PC-9 (cell line): ENCODE measurements at regions of chr17 and their contacts with region 1.

Region 1: GRCh38 chr17:39547713-39548478 is 59.8 kb downstream of the NEUROD2 start:
- DNase-seq: peak; percentile 49 to 67
- H3K4me3 ChIP-seq: no peak overlapping the region
- H3K27ac ChIP-seq: no peak overlapping the region
- H3K4me1 ChIP-seq: no peaks in the 10 kb centered on the region
- H3K27me3 ChIP-seq: no peaks in the 10 kb centered on the region
- CTCF ChIP-seq: peak; percentile 98

Region 2: DNA sequence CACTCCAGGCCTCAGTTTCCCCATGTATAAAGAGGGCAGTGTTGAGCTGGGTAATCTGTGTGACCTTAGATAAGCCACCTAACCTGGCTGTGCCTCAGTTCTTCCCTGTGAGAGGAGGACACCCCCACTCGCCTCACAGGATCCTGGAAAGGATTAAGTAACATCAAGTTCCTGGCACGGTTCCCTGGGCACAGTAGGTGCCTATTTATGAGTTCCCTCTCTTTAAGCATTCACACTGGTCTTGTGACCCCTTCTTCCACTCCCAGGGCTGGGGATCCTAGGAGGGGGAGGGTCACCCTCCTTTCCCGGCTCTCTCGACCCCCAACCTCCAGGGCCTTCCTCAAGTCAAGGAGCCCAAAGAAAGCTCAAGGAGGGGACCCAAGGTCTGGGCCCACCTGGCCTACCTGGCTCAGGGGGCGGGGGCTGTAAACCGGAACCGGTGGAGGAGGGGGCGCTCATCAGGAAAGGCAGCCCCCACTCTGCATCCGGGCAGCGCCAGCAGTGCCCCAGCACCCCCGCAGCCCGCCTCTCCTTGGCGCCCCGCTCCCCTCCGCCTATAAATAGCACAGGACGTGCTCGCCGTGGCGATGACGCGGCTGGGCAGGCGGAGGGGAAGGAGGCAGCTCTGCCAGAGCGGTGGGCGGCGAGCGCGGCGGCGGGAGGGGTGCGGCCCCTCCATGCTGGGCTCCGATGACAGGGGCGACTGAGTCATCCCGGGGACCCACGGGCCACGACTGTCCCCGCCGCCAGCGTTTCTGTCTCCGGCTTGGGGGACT is 338.4 kb before region 1 on chr17:
- CTCF ChIA-PET with region 1: interaction called, 5 read pairs
- POLR2A ChIA-PET with region 1: no interaction called
- intact Hi-C with region 1: loop called (anchors 2 kb)
- DNase-seq: no peak
- H3K4me3 ChIP-seq: no peak overlapping the region
- H3K27ac ChIP-seq: no peak overlapping the region
- H3K4me1 ChIP-seq: no peaks in the 10 kb centered on the region
- H3K27me3 ChIP-seq: no peaks in the 10 kb centered on the region
- CTCF ChIP-seq: no peak

Region 3: GRCh38 chr17:39527220-39527813 is 20.6 kb before region 1 on chr17:
- CTCF ChIA-PET with region 1: no interaction called
- POLR2A ChIA-PET with region 1: no interaction called
- intact Hi-C with region 1: loop called (anchors 1 kb)
- DNase-seq: no peak
- H3K4me3 ChIP-seq: no peak overlapping the region
- H3K27ac ChIP-seq: no peak overlapping the region
- H3K4me1 ChIP-seq: peaks cover 6% of the 10 kb centered on the region
- H3K27me3 ChIP-seq: no peaks in the 10 kb centered on the region
- CTCF ChIP-seq: peak; percentile 66

Region 4: GRCh38 chr17:39687811-39688518 is 140.1 kb after region 1 on chr17 and contains the start of gene PGAP3:
- CTCF ChIA-PET with region 1: interaction called, 15 read pairs
- POLR2A ChIA-PET with region 1: no interaction called
- intact Hi-C with region 1: no loop called
- DNase-seq: peak; percentile 82 to 86
- H3K4me3 ChIP-seq: peak within 1 kb of the TSS; percentile 68
- H3K27ac ChIP-seq: peak within 1 kb of the TSS; percentile 84
- H3K4me1 ChIP-seq: peaks cover 26% of the 10 kb centered on the region
- H3K27me3 ChIP-seq: no peaks in the 10 kb centered on the region
- CTCF ChIP-seq: no peak
- total RNA-seq, gene PGAP3: 15.0 and 16.2 TPM in 2 replicates